Gastrocnemius medialis (tissue), 4 donors: ENCODE measurements at regions of chr17 and their contacts with region 1.

Region 1: DNA sequence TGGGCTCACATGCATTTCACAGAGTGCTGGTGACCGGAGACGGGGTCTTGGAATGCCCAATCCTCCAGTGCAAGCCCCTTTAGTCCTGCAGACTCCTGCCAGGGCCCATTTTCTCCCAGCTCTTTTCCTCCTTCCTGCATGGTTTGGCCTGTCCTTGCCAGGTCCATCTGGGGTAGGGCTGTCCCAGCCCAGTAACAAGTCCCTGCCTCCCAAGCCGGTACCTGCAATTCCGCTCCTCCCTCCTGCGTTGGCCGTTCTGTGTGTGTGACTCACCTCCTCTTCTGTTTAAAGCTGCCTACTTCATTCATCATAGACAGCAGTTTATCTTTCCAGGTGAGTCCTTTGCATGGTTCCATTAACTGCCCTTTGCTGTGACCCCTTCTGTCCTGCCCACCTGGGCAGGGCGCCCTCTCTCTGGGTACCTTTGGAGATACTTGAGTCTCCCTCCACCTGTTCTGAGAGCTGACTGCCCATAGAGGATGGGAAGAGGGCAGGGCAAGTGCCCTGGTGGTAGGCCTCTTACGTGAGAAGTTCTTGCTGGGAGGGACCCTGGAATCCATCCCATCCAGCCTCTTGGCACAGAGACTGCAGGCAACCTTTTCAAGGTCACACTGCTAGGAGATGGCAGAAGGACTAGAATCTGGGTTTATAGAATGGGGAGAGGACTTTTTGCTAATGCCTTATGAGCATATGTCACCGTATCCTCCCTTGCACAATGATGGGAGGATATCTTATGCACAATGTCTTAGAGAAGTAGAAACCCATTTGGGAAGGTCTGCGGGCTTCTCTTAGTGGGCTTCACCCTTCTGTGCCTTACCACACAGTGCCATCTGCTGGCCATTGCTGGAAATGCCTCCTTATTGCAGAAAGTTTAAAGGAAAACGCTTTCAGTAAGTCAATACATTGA is 29.7 kb upstream of the LGALS9 start:
- DNase-seq: peak; percentile 45 to 64
- ATAC-seq: peak; percentile 50 to 64
- H3K4me3 ChIP-seq: no peak overlapping the region
- H3K27ac ChIP-seq: peak overlapping the region in 3 of 4 donors; percentile 6 to 17 (median 11)
- H3K4me1 ChIP-seq: peaks cover 0 to 3% of the 10 kb centered on the region in 2 donors
- H3K27me3 ChIP-seq: no peaks in the 10 kb centered on the region
- CTCF ChIP-seq: peak; percentile 83 to 94 (median 90)
- POLR2A ChIP-seq: no peak

Region 2: GRCh38 chr17:27072885-27073284 is 528.4 kb before region 1 on chr17:
- in situ Hi-C with region 1: no loop called
- intact Hi-C with region 1: no loop called
- DNase-seq: no peak
- ATAC-seq: no peak
- H3K4me3 ChIP-seq: no peak overlapping the region
- H3K27ac ChIP-seq: no peak overlapping the region
- H3K4me1 ChIP-seq: no peaks in the 10 kb centered on the region
- H3K27me3 ChIP-seq: no peaks in the 10 kb centered on the region
- CTCF ChIP-seq: no peak
- POLR2A ChIP-seq: no peak

Region 3: DNA sequence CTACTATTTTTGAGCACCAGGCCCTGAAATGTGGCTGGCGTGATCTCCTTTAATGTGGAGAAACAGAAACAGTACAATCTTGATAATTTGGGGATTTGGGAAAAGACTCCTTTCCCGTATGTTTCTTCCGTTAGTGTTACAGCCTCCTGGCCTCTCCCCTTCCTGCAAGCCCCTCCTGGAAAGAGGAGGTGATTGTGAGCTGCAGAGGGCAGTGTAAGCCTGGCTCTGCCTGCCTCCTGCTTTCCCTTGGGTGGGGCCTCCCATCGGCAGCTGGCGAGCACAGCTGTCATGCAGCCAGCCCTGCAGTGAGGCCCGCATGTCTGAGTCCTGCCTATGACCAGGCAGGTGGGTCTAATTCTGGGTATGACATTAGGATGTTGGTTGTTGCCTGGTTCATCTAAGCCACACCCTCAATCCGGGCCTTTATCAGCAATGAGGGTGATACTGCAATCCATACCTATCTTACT is 356.1 kb before region 1 on chr17:
- in situ Hi-C with region 1: no loop called
- intact Hi-C with region 1: loop called (anchors 2 kb)
- DNase-seq: peak; percentile 66 to 88
- ATAC-seq: peak; percentile 73 to 82
- H3K4me3 ChIP-seq: peak overlapping the region in 3 of 4 donors; percentile 12 to 41 (median 41)
- H3K27ac ChIP-seq: peak overlapping the region; percentile 63 to 87 (median 81)
- H3K4me1 ChIP-seq: peaks cover 19 to 27% of the 10 kb centered on the region in 2 donors
- H3K27me3 ChIP-seq: no peaks in the 10 kb centered on the region
- CTCF ChIP-seq: peak; percentile 59 to 79 (median 70)
- POLR2A ChIP-seq: no peak

Region 4: GRCh38 chr17:27455914-27456680 is 145.2 kb before region 1 on chr17 and contains the start of gene KSR1:
- in situ Hi-C with region 1: loop called in 1 of 4 experiments (anchors 10 kb)
- intact Hi-C with region 1: loop called (anchors 2 kb)
- DNase-seq: peak; percentile 44 to 67
- ATAC-seq: peak; percentile 86 to 91
- H3K4me3 ChIP-seq: peak within 1 kb of the TSS; percentile 73 to 92 (median 86)
- H3K27ac ChIP-seq: peak within 1 kb of the TSS; percentile 71 to 82 (median 78)
- H3K4me1 ChIP-seq: peaks cover 4 to 10% of the 10 kb centered on the region in 2 donors
- H3K27me3 ChIP-seq: no peaks in the 10 kb centered on the region
- CTCF ChIP-seq: peak in 3 of 5 experiments; percentile 34 to 44 (median 38)
- POLR2A ChIP-seq: peak; percentile 69 to 89
- total RNA-seq, gene KSR1: 10.4 to 17.7 (median 13.2) TPM

Region 5: GRCh38 chr17:27544350-27545131 is 56.8 kb before region 1 on chr17:
- in situ Hi-C with region 1: loop called in 1 of 4 experiments (anchors 5 kb)
- intact Hi-C with region 1: no loop called
- DNase-seq: no peak
- ATAC-seq: no peak
- H3K4me3 ChIP-seq: no peak overlapping the region
- H3K27ac ChIP-seq: no peak overlapping the region
- H3K4me1 ChIP-seq: peaks cover 0 to 4% of the 10 kb centered on the region in 2 donors
- H3K27me3 ChIP-seq: no peaks in the 10 kb centered on the region
- CTCF ChIP-seq: no peak
- POLR2A ChIP-seq: no peak

Region 6: GRCh38 chr17:27654654-27655524 is 53.6 kb after region 1 on chr17:
- in situ Hi-C with region 1: loop called (anchors 5 kb)
- intact Hi-C with region 1: loop called (anchors 1 kb)
- DNase-seq: peak in 1 of 2 donors; percentile 49
- ATAC-seq: no peak
- H3K4me3 ChIP-seq: no peak overlapping the region
- H3K27ac ChIP-seq: no peak overlapping the region
- H3K4me1 ChIP-seq: peaks cover 0 to 2% of the 10 kb centered on the region in 2 donors
- H3K27me3 ChIP-seq: no peaks in the 10 kb centered on the region
- CTCF ChIP-seq: peak; percentile 54 to 92 (median 82)
- POLR2A ChIP-seq: no peak